ENCODE measurements at regions of chr17 and their contacts with region 1.

Region 1: DNA sequence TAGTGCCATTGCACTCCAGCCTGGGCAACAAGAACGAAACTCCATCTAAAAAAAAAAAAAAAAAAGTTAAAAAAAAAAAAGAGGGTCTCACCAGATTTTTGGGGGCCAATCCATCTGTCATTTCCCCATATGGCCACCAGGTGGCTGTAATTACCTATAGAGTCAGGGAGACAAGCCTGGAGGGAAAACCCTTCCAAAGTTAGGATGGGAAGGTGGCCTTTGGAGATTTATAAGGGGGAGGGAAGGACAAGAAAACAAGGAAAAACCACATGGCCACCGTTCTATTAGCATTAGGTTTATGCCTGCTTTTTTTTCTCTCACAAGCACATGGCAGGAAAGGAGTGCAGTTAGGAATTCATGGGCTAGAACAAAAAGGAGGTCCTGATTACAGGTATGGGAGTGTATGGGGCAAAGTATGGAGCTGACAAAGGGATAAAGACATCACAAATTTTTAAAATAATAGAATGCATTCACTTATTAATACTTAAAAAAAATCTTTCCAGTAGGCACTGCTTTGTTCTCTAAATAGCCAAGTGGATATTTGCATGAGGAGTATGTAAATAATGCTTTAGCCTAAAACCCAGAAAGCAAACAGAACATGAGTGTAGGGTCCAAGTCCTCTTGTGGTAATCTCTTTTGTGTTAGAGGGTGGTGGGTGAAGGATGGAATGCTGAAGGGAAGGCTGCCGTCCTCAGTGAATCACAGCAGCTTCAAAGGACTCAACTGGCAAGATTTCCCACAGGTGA is 5.1 kb downstream of the CYB5D1 start:
- DNase-seq: no peak
- ATAC-seq: no peak
- H3K4me3 ChIP-seq: no peak overlapping the region
- H3K27ac ChIP-seq: no peak overlapping the region
- H3K4me1 ChIP-seq: no peaks in the 10 kb centered on the region
- H3K27me3 ChIP-seq: no peaks in the 10 kb centered on the region

Region 2: GRCh38 chr17:7897773-7898172 is 34.9 kb after region 1 on chr17:
- intact Hi-C with region 1: loop called (anchors 5 kb)
- DNase-seq: no peak
- ATAC-seq: no peak
- H3K4me3 ChIP-seq: no peak overlapping the region
- H3K27ac ChIP-seq: no peak overlapping the region
- H3K4me1 ChIP-seq: no peaks in the 10 kb centered on the region
- H3K27me3 ChIP-seq: no peaks in the 10 kb centered on the region

Region 3: DNA sequence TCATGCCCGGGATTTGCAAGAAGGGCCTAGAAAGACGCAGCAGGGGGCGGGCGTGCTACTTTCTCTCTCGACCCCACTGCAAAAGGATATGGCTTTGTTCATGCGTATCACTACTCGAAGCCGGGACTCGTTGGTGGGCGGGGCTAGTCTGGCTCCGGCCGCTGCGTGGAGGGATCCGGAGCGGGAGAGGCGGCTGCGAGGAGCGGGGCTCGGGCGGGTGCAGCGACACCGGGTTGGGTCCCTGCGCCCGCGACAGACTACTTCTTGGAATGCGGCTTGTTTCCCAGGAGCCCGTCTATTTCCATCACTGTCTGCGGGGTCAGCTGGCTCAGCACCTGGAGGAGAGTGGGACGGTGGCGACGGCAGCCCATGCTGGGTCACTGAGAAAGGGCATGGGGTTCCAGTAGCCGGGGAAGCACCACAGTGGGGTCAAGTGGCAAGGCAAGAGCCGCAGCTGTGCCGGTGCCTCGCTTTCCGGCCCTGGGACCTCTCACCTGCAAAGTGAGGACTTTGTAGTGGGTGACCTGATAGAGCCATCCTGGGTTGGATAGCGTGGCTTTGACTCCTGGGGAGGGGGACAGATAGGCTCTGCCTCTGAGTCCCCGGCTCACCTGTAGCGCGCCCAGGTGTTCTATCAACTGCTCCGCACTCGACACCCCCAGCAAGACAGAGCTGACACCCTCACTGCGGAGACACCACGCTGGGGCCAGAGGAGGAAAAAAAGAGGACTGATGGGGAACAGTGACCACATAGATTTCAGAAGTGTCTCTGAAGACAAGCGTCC is 60.2 kb after region 1 on chr17:
- intact Hi-C with region 1: loop called in 1 of 2 experiments (anchors 5 kb)
- DNase-seq: peak; percentile 92 to 94
- ATAC-seq: peak; percentile 92
- H3K4me3 ChIP-seq: peak overlapping the region in 1 of 2 donors; percentile 21
- H3K27ac ChIP-seq: no peak overlapping the region
- H3K4me1 ChIP-seq: no peaks in the 10 kb centered on the region
- H3K27me3 ChIP-seq: no peaks in the 10 kb centered on the region

Region 4: GRCh38 chr17:8289103-8289397 is 426.2 kb after region 1 on chr17:
- intact Hi-C with region 1: no loop called
- DNase-seq: peak; percentile 87 to 94
- ATAC-seq: no peak
- H3K4me3 ChIP-seq: peak overlapping the region; percentile 43 to 44
- H3K27ac ChIP-seq: no peak overlapping the region
- H3K4me1 ChIP-seq: no peaks in the 10 kb centered on the region
- H3K27me3 ChIP-seq: no peaks in the 10 kb centered on the region

Measured in aorta (tissue), 5 donors.